BJ (cell line): ENCODE measurements at regions of chr1 and their contacts with region 1.

Region 1: DNA sequence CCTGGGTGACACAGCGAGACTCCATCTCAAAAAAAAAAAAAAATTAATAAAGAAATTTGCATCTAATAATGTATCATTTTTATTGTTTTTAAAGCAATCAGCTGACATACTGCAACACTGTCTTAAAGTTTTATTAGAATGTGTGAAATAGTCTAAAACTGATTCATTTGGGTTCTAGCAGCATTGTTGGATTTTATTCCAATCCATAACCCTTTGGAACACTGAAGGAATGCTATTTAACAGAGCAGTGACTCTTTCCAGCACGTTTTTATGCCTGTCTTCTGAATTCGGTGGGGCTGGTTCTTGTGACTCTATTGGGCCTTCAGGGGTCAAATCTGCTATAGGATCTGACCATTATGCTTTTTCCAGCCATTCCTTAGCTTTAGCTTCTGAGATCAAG is 18.2 kb upstream of the FMO4 start:
- DNase-seq: peak; percentile 78
- H3K4me3 ChIP-seq: no peak overlapping the region
- H3K27me3 ChIP-seq: no peaks in the 10 kb centered on the region
- CTCF ChIP-seq: no peak

Region 2: DNA sequence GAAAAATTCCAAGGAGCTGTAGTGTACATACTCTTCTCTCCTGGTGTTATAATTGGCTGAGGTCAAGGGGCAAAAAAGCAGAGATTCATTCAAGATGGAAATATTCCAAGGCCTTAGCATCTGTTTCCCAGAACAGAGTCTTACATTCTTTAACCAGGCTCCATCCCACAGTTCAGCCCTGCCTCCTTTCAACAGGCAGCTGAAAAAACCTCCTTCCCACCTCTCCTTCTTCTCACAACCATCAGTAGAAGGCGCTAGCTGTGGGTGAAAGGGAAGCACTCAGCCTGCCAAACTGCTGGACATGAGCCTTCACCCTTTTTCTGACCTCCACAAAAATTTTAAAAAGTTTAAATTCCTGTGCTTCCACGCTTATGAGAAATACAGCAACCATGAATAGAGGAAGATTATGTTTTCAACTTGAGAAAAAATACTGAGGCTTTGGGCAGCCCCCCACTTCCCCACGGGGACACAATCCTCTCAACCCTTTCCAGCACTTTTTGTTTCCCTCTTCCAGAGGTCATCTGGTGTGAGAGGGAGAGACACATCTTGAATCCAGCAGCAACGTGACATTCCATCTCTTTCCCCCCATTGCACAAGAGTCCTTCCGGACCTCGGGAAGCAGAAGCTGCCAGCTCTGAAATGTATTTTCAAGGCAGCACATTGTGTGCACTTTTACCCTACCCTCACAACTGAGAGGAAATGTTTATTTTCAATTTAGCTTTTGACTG is 154.0 kb before region 1 on chr1:
- CTCF ChIA-PET with region 1: interaction called, 4 read pairs
- POLR2A ChIA-PET with region 1: interaction called, 10 read pairs
- DNase-seq: peak; percentile 100
- H3K4me3 ChIP-seq: no peak overlapping the region
- H3K27me3 ChIP-seq: no peaks in the 10 kb centered on the region
- CTCF ChIP-seq: peak; percentile 54

Region 3: GRCh38 chr1:171221750-171222149 is 74.1 kb before region 1 on chr1:
- CTCF ChIA-PET with region 1: interaction called, 9 read pairs
- POLR2A ChIA-PET with region 1: interaction called, 11 read pairs
- DNase-seq: no peak
- H3K4me3 ChIP-seq: no peak overlapping the region
- H3K27me3 ChIP-seq: no peaks in the 10 kb centered on the region
- CTCF ChIP-seq: no peak

Region 4: DNA sequence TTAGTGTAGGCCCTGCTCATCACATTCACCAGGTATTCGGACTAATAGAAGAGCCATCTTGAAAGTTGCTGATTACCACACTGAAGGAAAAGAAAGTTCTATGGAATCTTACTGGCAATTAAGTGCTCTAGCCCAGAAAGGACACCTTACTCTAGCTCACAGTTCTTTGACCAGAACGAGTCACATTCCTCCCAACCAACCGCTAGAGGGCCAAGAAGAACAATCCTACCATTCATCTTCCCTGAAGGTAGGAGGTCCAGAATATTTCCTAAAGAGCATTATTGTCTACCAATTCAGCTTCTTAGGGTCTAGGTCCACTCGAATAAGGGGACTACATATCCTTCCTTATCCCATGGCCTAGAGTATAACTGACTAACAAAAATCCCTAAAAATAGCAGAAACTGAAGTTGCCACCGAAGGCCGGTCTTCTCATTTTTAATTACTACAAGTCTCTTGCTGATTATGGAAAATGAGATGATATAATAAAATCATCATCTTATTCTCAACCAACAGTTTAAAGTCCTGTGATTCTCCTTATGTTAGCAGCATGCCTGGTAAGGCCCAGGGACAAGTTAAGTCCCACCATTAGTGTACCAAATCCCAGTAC is 50.3 kb before region 1 on chr1:
- CTCF ChIA-PET with region 1: interaction called, 17 read pairs
- POLR2A ChIA-PET with region 1: interaction called, 3 read pairs
- DNase-seq: no peak
- H3K4me3 ChIP-seq: no peak overlapping the region
- H3K27me3 ChIP-seq: no peaks in the 10 kb centered on the region; the same call in 1 of the 2 replicates
- CTCF ChIP-seq: peak; percentile 84

Region 5: GRCh38 chr1:171251042-171251951 is 44.5 kb before region 1 on chr1:
- CTCF ChIA-PET with region 1: interaction called, 17 read pairs
- POLR2A ChIA-PET with region 1: no interaction called
- DNase-seq: no peak
- H3K4me3 ChIP-seq: peak overlapping the region; percentile 51
- H3K27me3 ChIP-seq: no peaks in the 10 kb centered on the region; the same call in 1 of the 2 replicates
- CTCF ChIP-seq: peak; percentile 71

Region 6: GRCh38 chr1:171313835-171314320 is 18.1 kb after region 1 on chr1 and contains the start of gene FMO4:
- CTCF ChIA-PET with region 1: interaction called, 16 read pairs
- POLR2A ChIA-PET with region 1: interaction called, 11 read pairs
- DNase-seq: peak; percentile 99
- H3K4me3 ChIP-seq: peak within 1 kb of the TSS; percentile 25
- H3K27me3 ChIP-seq: no peaks in the 10 kb centered on the region
- CTCF ChIP-seq: peak; percentile 79
- polyA plus RNA-seq, gene FMO4: 4.2 and 7.5 TPM in 2 replicates

Region 7: GRCh38 chr1:171389171-171389570 is 93.3 kb after region 1 on chr1:
- CTCF ChIA-PET with region 1: no interaction called
- POLR2A ChIA-PET with region 1: no interaction called
- DNase-seq: peak; percentile 3
- H3K4me3 ChIP-seq: no peak overlapping the region
- H3K27me3 ChIP-seq: no peaks in the 10 kb centered on the region
- CTCF ChIP-seq: no peak